Esophagus muscularis mucosa (tissue), 4 donors: ENCODE measurements at regions of chr15 and their contacts with region 1.

Region 1: DNA sequence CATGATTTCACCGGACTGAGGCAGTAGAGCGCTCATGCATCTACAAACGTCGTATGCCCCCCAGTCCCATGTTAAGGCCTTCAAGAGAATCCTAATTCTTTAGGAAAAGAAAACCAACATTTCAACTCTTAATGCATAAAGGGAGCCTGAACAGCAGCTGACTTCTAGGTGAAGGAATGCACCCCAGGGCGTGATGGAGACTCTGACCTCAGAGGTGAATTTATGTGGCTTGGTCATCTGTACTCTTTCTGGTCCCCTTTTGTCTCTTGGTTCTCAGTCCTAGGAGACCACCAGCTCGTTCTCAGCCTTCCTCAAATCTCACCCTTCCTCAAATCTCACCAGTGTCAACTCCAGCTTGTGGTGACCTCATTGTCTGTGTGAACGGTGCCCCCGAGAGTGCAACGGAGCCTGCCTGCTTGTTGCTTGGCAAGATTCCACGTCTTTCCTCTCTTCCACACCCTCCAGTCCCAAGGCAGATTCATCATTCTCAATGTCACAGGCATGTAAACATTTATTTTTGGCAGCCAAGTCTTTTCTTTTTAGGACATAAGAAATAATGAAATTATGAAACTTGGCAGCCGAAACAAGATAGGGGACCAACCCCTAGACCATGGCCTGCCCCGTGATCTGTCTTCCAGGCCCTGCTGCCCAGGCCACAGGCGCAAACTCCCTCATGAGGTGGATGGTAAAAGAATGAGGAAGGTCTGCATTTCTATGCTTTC is 166.2 kb downstream of the ADAMTS17 start:
- DNase-seq: no peak
- H3K4me3 ChIP-seq: no peak overlapping the region
- H3K27ac ChIP-seq: peak overlapping the region; percentile 73 to 82 (median 82)
- H3K4me1 ChIP-seq: peaks cover 15 to 48% (median 45%) of the 10 kb centered on the region in 4 donors
- H3K27me3 ChIP-seq: no peaks in the 10 kb centered on the region
- CTCF ChIP-seq: no peak
- EP300 ChIP-seq: no peak
- POLR2A ChIP-seq: no peak

Region 2: DNA sequence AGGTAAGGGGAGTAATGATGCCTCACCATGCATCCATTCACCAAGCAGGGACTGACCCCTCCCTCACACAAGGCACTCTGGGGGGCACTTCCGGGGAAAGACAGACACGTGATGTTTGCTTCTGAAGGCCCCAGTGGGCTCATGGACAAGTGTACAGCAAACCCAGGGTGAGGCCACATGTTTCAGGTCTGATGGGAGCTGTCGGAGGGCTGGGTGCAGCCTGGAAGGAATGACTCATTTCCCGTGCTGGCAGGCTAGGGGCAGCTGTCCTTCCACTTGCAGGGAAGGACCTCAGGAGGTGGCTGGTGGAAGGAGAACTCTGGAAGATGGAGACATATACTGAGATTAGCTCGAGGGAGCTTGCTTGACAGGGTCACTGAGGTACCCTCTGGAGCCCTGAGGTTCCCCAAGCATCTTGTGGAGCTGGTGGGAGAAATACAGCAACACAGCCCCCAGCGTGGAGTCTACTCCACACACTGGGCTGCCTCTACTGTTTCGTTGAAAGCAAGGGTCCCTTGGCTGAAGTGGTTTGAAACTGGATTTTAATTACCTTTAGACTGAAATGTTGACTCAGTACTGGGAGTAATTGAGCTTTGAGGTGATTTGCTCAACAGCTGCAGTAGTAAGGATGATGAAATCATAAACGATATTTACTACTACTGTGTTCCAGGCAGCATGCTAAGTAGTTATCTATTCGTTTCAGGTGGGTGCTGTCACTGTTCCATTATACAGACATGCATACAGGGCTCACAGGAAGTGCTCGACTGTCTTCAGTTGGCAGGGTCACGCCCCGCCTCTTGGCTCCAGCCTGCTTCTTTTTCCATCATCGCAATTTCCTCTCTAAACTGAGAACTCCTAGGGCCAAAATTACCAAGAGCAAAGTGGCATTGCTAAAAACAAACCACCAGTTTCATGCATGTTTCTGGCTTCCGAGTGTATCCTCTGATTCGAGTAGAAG is 64.2 kb before region 1 on chr15:
- intact Hi-C with region 1: no loop called
- DNase-seq: no peak
- H3K4me3 ChIP-seq: no peak overlapping the region
- H3K27ac ChIP-seq: peak overlapping the region; percentile 41 to 81 (median 57)
- H3K4me1 ChIP-seq: peaks cover 50 to 58% (median 55%) of the 10 kb centered on the region in 4 donors
- H3K27me3 ChIP-seq: no peaks in the 10 kb centered on the region
- CTCF ChIP-seq: no peak
- EP300 ChIP-seq: no peak
- POLR2A ChIP-seq: no peak

Region 3: GRCh38 chr15:100308213-100308600 is 132.7 kb after region 1 on chr15:
- intact Hi-C with region 1: loop called (anchors 5 kb)
- DNase-seq: no peak
- H3K4me3 ChIP-seq: peak overlapping the region; percentile 5 to 34 (median 21)
- H3K27ac ChIP-seq: peak overlapping the region; percentile 77 to 81 (median 78)
- H3K4me1 ChIP-seq: peaks cover 3 to 55% (median 45%) of the 10 kb centered on the region in 4 donors
- H3K27me3 ChIP-seq: no peaks in the 10 kb centered on the region
- CTCF ChIP-seq: no peak
- EP300 ChIP-seq: no peak
- POLR2A ChIP-seq: no peak